Mammary epithelial cell (primary cell): ENCODE measurements at regions of chr16 and their contacts with region 1.

Region 1: GRCh38 chr16:31333686-31334649 is 21.0 kb upstream of the ITGAX start:
- DNase-seq: peak; percentile 17
- H3K4me3 ChIP-seq: no peak overlapping the region
- H3K27ac ChIP-seq: no peak overlapping the region
- H3K4me1 ChIP-seq: peaks cover 6% of the 10 kb centered on the region
- H3K27me3 ChIP-seq: peaks cover 22% of the 10 kb centered on the region
- CTCF ChIP-seq: peak; percentile 37 to 63

Region 2: DNA sequence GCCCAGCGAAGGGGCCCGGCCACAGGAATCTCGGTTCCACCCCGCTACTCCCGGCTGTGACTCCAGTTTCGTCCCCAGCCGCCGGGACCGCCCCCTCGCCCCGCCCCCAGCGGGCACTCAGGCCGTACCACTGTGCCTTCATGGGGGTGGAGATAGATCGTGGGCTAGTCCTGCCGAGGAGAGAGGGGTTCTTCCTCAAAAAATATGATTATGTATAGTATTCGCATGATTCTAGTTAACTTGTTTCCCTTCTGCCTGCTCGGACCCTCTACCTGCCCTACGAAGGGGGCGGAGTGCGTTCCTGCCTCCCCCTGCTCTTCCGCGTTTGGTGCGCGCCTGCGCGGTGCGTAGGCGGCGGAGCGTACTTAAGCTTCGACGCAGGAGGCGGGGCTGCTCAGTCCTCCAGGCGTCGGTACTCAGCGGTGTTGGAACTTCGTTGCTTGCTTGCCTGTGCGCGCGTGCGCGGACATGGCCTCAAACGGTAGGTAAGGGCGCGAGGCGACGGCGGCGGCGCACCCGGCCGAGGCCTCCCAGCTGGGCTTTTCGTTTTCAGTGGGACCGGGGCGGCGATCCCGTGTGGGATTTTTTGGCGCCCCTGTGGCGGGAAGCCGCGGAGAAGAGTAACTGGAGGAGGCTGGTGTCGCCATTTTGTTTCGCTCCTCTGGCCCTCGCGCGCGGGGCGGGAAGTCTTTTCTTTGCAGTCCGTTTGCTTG is 154.1 kb before region 1 on chr16 and contains the start of gene FUS:
- CTCF ChIA-PET with region 1: no interaction called
- dilution Hi-C with region 1: no loop called
- in situ Hi-C with region 1: no loop called
- intact Hi-C with region 1: loop called (anchors 2 kb)
- DNase-seq: peak; percentile 79
- H3K4me3 ChIP-seq: peak within 1 kb of the TSS; percentile 62 to 95 (median 75)
- H3K27ac ChIP-seq: peak within 1 kb of the TSS; percentile 95
- H3K4me1 ChIP-seq: peaks cover 27% of the 10 kb centered on the region
- H3K27me3 ChIP-seq: no peaks in the 10 kb centered on the region
- CTCF ChIP-seq: no peak
- total RNA-seq, gene FUS: 19.5 to 404 TPM

Region 3: GRCh38 chr16:31273676-31274075 is 60.3 kb before region 1 on chr16:
- CTCF ChIA-PET with region 1: no interaction called
- dilution Hi-C with region 1: no loop called
- in situ Hi-C with region 1: no loop called
- intact Hi-C with region 1: loop called (anchors 2 kb)
- DNase-seq: peak; percentile 86
- H3K4me3 ChIP-seq: no peak overlapping the region
- H3K27ac ChIP-seq: peak overlapping the region; percentile 73
- H3K4me1 ChIP-seq: peaks cover 19% of the 10 kb centered on the region
- H3K27me3 ChIP-seq: no peaks in the 10 kb centered on the region
- CTCF ChIP-seq: no peak

Region 4: GRCh38 chr16:31365131-31365865 is 31.3 kb after region 1 on chr16:
- CTCF ChIA-PET with region 1: interaction called, 3 read pairs
- dilution Hi-C with region 1: no loop called
- in situ Hi-C with region 1: no loop called
- intact Hi-C with region 1: loop called (anchors 5 kb)
- DNase-seq: no peak
- H3K4me3 ChIP-seq: no peak overlapping the region
- H3K27ac ChIP-seq: no peak overlapping the region
- H3K4me1 ChIP-seq: no peaks in the 10 kb centered on the region
- H3K27me3 ChIP-seq: no peaks in the 10 kb centered on the region
- CTCF ChIP-seq: no peak

Region 5: GRCh38 chr16:31404353-31405064 is 70.5 kb after region 1 on chr16:
- CTCF ChIA-PET with region 1: no interaction called
- dilution Hi-C with region 1: no loop called
- in situ Hi-C with region 1: no loop called
- intact Hi-C with region 1: no loop called
- DNase-seq: no peak
- H3K4me3 ChIP-seq: no peak overlapping the region
- H3K27ac ChIP-seq: no peak overlapping the region
- H3K4me1 ChIP-seq: no peaks in the 10 kb centered on the region
- H3K27me3 ChIP-seq: no peaks in the 10 kb centered on the region
- CTCF ChIP-seq: no peak

Region 6: DNA sequence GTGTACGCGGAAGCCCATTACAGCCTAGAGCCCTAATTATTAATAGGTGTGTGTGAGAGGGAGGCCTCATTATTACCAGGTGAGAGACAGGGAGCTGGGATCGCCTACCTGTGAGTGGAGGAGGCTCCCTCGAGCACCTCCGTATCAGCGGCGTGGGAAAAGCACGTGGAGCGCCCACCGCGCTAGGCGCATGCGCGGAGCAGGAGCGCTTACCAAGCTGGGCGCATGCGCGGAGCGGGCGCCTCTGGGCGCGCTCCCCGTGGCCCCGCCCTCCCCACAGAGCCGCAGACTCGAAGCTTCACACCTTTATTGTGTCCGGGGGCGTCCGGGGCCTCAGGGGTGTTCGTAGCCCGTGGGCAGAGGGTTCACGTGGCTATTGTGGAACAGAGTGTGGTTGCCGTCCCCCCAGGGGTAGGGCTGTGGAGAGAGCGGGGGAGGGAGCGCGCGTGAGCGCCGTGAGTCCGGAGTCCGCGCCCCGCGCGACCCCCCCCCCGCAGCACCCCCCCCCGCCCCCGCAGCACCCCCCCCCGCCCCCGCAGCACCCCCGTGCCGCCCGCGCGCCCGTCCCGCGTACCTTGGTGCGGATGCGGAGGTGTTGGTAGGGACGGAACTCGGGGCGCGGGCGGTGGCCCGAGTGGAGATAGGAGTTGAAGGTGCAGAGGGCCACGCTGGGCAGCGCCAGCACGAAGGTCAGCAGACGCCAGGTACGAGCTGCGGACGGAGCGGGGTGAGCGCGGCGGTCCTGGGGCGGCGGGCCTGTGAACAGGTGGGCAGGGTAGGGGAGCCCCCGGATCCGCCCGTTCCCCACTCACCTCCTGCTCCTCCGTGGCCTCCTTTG is 93.7 kb after region 1 on chr16:
- CTCF ChIA-PET with region 1: no interaction called
- dilution Hi-C with region 1: loop called (anchors 5 kb)
- in situ Hi-C with region 1: no loop called
- intact Hi-C with region 1: loop called (anchors 10 kb)
- DNase-seq: no peak
- H3K4me3 ChIP-seq: peak overlapping the region in 2 of 3 experiments; percentile 24 to 26
- H3K27ac ChIP-seq: no peak overlapping the region
- H3K4me1 ChIP-seq: peaks cover 3% of the 10 kb centered on the region
- H3K27me3 ChIP-seq: peaks cover 2% of the 10 kb centered on the region
- CTCF ChIP-seq: no peak